ENCODE measurements at regions of chr9 and their contacts with region 1.

Region 1: GRCh38 chr9:77433675-77434445 is 214.3 kb downstream of the GNA14 start:
- DNase-seq: peak; percentile 62 to 90 (median 78)

Region 2: DNA sequence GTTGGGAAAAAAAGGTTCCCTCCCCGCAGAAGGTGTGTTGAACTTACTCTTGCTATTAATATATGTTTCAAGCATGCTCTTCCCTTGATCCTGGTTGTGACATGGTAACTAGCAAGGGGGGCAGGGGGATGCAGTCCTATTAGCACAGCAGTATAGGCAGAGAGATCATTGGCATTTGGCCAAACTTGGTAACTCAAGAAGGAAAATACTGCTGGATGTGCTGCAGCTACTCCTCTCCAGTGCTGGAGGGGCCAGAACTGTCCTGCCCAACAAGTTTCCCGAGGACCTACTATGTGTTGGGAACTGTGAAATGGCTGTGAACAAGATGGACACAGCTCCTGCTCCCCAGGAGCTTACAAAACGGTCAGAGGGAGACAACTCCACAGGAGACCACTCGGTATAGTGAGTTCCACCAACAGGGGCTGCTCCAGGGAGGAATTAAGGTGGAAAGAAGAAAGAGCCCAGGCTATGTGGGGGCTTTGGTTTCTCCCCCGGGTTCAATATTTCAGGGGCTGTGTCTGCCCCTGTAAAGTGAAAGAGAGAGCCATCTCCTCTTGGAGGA is 135.4 kb after region 1 on chr9:
- intact Hi-C with region 1: no loop called
- DNase-seq: no peak

Region 3: DNA sequence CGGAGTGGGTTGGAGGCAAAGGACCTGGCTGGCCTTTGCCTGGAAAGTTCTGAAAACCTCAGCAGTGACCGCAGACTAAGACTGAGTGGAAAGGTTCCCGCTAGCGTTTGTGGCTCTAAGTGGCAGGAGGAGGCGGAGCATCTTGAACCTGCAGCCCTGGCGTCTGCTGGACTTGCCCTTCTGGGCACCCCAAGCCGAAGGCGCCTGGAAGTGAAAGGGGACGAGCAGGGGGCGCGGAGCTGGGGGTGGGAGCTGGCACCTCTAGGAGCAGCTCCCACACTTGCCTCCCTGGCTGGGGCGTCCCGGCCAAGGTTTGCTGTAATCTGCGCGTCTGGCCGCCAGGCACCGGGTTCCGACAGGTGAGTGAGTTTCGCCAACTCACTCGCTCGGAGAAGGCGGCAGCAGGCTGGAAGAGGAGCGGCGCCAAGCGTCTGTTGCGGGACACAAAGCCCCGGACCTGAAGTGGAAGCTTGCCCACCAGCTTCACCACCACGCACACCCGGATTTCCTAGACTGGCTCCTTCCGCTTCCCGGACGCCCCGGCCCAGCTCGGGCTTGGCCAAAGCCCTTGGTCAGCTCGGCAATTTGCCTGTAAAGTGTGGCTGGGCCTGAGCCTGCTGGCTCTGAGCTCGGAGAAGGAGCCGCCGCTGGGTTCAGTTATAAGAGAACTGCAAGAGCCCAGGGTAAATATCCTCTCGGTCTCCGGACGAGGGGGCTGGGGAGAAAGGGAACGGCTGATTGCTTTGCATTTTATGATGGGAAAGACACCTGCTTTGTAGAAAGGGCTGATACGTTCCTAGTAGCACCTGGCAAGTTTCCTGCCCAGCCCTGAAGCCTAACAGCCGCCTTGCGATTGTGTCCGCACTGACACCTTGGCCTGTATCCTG is 214.6 kb after region 1 on chr9 and contains the start of gene GNA14:
- intact Hi-C with region 1: loop called (anchors 10 kb)
- DNase-seq: peak in 39 of 42 donors; percentile 4 to 74 (median 37)

Measured in head of caudate nucleus (tissue), 42 donors.